Psoas muscle (tissue), 8 donors: ENCODE measurements at regions of chr12 and their contacts with region 1.

Region 1: DNA sequence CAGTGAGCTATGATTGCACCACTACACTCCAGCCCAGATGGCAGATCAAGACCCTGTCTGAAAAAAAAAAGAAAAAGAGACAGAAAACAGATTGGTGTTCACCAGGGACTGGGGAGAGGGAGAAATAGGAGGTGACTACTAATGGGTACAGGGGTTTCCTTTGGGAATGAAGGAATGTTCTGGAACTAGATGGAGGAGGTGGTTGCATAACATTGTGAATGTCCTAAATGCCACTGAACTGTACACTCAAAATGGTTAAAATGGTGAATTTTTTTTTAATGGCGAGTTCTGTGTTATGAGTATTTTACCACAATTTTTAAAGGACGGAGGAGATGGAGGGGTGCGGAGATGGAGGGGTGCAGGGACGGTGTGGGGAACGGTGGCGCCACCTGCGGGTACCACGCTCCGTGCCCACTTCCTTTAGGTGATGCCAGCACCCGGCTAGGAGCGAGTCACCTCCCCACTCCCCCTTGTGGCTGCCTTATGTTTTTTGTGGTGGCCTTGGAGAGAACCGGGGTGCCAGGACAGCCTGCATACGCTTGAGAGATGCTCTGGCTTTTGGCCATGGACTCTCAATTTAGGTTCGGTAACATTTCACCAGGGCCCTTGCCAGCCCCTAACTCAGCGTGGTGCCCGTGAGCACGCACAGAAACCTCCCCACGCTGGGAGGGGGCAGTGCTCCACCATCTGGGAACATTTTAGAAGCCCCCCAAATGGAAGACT is 16.1 kb downstream of the UBC start:
- DNase-seq: peak in 1 of 2 donors; percentile 75
- ATAC-seq: peak; percentile 51 to 76 (median 62)
- H3K4me3 ChIP-seq: no peak overlapping the region
- H3K27ac ChIP-seq: no peak overlapping the region
- H3K4me1 ChIP-seq: no peaks in the 10 kb centered on the region
- H3K27me3 ChIP-seq: no peaks in the 10 kb centered on the region
- CTCF ChIP-seq: peak; percentile 43

Region 2: GRCh38 chr12:124804011-124804621 is 94.2 kb before region 1 on chr12:
- intact Hi-C with region 1: loop called in 1 of 2 experiments (anchors 10 kb)
- DNase-seq: peak; percentile 47 to 79
- ATAC-seq: peak; percentile 85 to 92 (median 91)
- H3K4me3 ChIP-seq: no peak overlapping the region
- H3K27ac ChIP-seq: peak overlapping the region; percentile 13
- H3K4me1 ChIP-seq: peaks cover 11% of the 10 kb centered on the region
- H3K27me3 ChIP-seq: no peaks in the 10 kb centered on the region
- CTCF ChIP-seq: no peak

Region 3: GRCh38 chr12:124884587-124885438 is 13.5 kb before region 1 on chr12:
- intact Hi-C with region 1: no loop called
- DNase-seq: no peak
- ATAC-seq: no peak
- H3K4me3 ChIP-seq: no peak overlapping the region
- H3K27ac ChIP-seq: no peak overlapping the region
- H3K4me1 ChIP-seq: no peaks in the 10 kb centered on the region
- H3K27me3 ChIP-seq: no peaks in the 10 kb centered on the region
- CTCF ChIP-seq: no peak

Region 4: GRCh38 chr12:125049093-125049458 is 150.7 kb after region 1 on chr12:
- intact Hi-C with region 1: no loop called
- DNase-seq: no peak
- ATAC-seq: peak in 1 of 4 donors; percentile 39
- H3K4me3 ChIP-seq: peak overlapping the region; percentile 71
- H3K27ac ChIP-seq: peak overlapping the region; percentile 27
- H3K4me1 ChIP-seq: no peaks in the 10 kb centered on the region
- H3K27me3 ChIP-seq: no peaks in the 10 kb centered on the region
- CTCF ChIP-seq: no peak

Region 5: DNA sequence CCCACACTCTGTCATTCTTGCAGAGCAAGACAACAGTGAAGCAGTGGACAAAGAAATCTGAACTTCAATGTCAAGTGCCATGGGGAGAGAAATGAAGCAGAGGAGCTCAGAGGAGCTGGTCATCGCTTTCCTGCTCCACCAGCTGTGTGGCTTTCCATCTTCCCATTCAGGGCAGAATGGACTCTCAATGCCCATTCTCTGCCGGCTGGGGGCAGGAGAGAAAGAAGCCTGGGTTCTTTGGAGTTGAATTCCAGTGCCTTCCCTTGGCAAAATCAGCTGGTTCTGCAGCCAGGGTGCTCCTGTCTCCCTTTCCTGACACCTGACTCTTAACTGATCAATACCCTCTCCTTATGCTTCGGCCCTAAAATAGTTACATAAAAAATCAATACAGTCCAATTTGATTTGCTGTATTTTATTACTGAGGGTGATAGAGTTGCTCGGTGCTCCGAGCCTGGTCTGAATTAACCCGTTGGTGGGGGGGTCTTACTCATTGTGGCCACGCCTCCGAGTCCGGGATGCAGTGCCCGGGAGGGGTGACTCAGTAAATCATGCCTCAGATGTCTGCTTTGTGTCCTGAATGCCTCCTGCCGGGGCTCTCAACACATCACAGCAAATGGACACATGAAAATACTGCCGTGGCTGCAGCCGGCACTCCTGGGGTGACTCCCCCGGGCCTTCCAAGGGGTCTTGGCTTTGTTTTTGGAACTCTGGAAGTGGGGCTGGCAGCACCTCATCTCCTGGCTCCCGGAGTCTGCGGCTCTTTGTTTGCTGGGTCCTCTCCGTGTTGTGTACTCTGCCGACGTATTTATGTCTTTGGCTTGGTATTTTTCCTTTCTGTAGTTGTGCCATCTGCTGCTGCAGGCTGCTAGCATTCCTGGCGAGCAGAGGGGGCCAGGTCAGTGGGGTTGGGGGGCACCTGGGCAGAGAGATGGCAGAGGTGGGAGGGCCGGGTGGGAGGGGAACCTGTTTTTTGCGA is 295.7 kb after region 1 on chr12:
- intact Hi-C with region 1: no loop called
- DNase-seq: no peak
- ATAC-seq: no peak
- H3K4me3 ChIP-seq: no peak overlapping the region
- H3K27ac ChIP-seq: no peak overlapping the region
- H3K4me1 ChIP-seq: no peaks in the 10 kb centered on the region
- H3K27me3 ChIP-seq: peaks cover 0 to 29% (median 13%) of the 10 kb centered on the region in 3 donors
- CTCF ChIP-seq: no peak